ENCODE measurements at regions of chr3 and their contacts with region 1.

Region 1: GRCh38 chr3:9088441-9089353 is 125.4 kb upstream of the RAD18 start:
- DNase-seq: no peak
- H3K4me3 ChIP-seq: no peak overlapping the region
- H3K27ac ChIP-seq: no peak overlapping the region
- H3K4me1 ChIP-seq: peaks cover 0 to 4% (median 0%) of the 10 kb centered on the region in 4 experiments; a peak in 2 of 7 replicates
- H3K27me3 ChIP-seq: no peaks in the 10 kb centered on the region
- CTCF ChIP-seq: no peak
- EP300 ChIP-seq: no peak
- POLR2A ChIP-seq: no peak
- RAD21 ChIP-seq: no peak

Region 2: GRCh38 chr3:9098569-9099367 is 10.1 kb after region 1 on chr3:
- CTCF ChIA-PET with region 1: interaction called, 7 read pairs
- POLR2A ChIA-PET with region 1: interaction called, 11 read pairs
- DNase-seq: no peak
- H3K4me3 ChIP-seq: no peak overlapping the region
- H3K27ac ChIP-seq: no peak overlapping the region
- H3K4me1 ChIP-seq: peaks cover 4 to 22% (median 18%) of the 10 kb centered on the region in 4 experiments; a peak in 5 of 7 replicates
- H3K27me3 ChIP-seq: no peaks in the 10 kb centered on the region
- CTCF ChIP-seq: no peak
- EP300 ChIP-seq: no peak
- POLR2A ChIP-seq: no peak
- RAD21 ChIP-seq: no peak

Region 3: DNA sequence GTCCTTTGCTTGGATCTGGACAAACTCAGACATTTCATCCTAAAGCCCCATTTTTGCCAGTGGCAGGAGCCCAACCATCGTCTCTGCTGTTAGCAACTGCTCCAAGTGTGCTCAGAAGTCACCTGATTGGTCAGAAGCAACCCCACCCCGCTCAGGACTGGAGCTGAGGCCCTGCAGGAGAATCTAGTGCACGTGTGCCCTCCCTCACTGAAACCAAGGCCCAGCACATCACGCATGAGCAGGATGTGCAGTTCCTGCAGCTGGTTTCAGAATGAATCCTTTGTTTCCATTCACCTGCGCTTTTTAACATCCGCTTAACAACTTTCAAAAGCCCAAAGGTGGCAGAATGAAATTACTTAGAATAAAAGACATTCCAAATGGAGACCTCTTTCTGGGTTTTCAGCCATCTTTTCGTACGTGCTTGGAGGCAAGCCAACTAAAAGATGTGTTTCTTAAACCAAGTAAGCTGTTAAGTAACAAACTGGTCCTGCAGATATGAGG is 79.6 kb after region 1 on chr3:
- CTCF ChIA-PET with region 1: no interaction called
- POLR2A ChIA-PET with region 1: no interaction called
- DNase-seq: no peak
- H3K4me3 ChIP-seq: no peak overlapping the region
- H3K27ac ChIP-seq: no peak overlapping the region
- H3K4me1 ChIP-seq: peaks cover 0 to 5% (median 2%) of the 10 kb centered on the region in 4 experiments; a peak in 3 of 7 replicates
- H3K27me3 ChIP-seq: no peaks in the 10 kb centered on the region
- CTCF ChIP-seq: no peak
- EP300 ChIP-seq: no peak
- POLR2A ChIP-seq: no peak
- RAD21 ChIP-seq: no peak

Region 4: GRCh38 chr3:9183811-9184460 is 95.2 kb after region 1 on chr3:
- CTCF ChIA-PET with region 1: no interaction called
- POLR2A ChIA-PET with region 1: no interaction called
- DNase-seq: peak; percentile 29 to 62
- H3K4me3 ChIP-seq: peak overlapping the region in 1 of 4 experiments; percentile 16; a peak in 1 of 8 replicates
- H3K27ac ChIP-seq: no peak overlapping the region
- H3K4me1 ChIP-seq: peaks cover 2 to 15% (median 11%) of the 10 kb centered on the region in 4 experiments; a peak in 5 of 7 replicates
- H3K27me3 ChIP-seq: no peaks in the 10 kb centered on the region
- CTCF ChIP-seq: no peak
- EP300 ChIP-seq: no peak
- POLR2A ChIP-seq: no peak
- RAD21 ChIP-seq: peak in 1 of 2 experiments; percentile 16; a peak in 1 of 4 replicates

Region 5: GRCh38 chr3:9280451-9281219 is 191.9 kb after region 1 on chr3:
- CTCF ChIA-PET with region 1: no interaction called
- POLR2A ChIA-PET with region 1: no interaction called
- DNase-seq: no peak
- H3K4me3 ChIP-seq: no peak overlapping the region
- H3K27ac ChIP-seq: no peak overlapping the region
- H3K4me1 ChIP-seq: peaks cover 5 to 8% (median 6%) of the 10 kb centered on the region in 4 experiments
- H3K27me3 ChIP-seq: no peaks in the 10 kb centered on the region
- CTCF ChIP-seq: peak in 1 of 3 experiments; percentile 12; a peak in 1 of 4 replicates
- EP300 ChIP-seq: no peak
- POLR2A ChIP-seq: no peak
- RAD21 ChIP-seq: peak in 1 of 2 experiments; percentile 16; a peak in 1 of 4 replicates

Measured in H1 (cell line).